Dendritic cell treated with granulocyte-macrophage colony-stimulating factor and Interleukin-4, amounts not matched to agents 40 ng/mL and 50 ng/mL, for 4 days (primary cell): ENCODE measurements at regions of chr19 and their contacts with region 1.

Region 1: DNA sequence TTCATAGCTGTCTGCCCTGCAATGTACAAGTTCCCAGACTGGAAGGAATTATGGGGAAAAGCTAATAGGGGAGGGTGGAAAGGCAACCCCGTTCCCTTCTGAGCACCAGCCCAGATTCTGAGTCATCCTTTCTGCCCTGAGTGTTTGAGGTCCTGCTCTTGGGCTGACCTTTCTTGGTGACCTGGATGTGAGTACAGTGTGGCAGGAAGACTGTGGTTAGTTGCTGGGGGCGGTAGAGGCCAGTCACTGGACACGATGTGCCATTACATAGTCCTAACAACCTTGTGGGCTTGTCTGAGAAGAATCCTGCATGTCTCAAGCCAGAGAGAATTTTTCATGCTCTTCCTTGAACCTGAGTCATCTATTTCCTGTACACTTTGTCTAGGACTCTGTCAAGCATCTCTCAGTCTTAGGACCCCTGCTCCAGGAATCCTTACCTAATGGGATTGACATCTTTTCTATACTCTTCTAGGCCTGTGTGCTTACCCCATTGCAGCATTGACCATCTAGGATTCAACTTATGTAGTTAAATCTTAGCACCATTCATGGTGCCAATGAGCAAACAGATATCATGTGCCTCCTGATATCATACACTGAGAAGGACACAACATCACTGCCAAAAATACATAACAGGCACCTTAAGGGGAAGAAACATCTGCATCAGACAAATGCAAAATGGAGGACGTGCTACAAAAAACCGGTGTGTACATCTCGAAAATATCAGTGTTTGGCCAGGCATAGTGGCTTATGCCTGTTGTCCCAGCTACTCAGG is 8.1 kb upstream of the ANGPTL4 start:
- H3K4me3 Mint-ChIP-seq: no peak overlapping the region
- H3K27ac Mint-ChIP-seq: peak overlapping the region; percentile 41
- H3K4me1 Mint-ChIP-seq: peaks cover 37% of the 10 kb centered on the region
- H3K27me3 Mint-ChIP-seq: peaks cover 43% of the 10 kb centered on the region

Region 2: GRCh38 chr19:8208922-8209461 is 146.8 kb before region 1 on chr19 and contains the start of gene CERS4:
- intact Hi-C with region 1: no loop called
- H3K4me3 Mint-ChIP-seq: peak within 1 kb of the TSS; percentile 61
- H3K27ac Mint-ChIP-seq: no peak within 1 kb of the TSS
- H3K4me1 Mint-ChIP-seq: peaks cover 13% of the 10 kb centered on the region
- H3K27me3 Mint-ChIP-seq: peaks cover 72% of the 10 kb centered on the region

Region 3: DNA sequence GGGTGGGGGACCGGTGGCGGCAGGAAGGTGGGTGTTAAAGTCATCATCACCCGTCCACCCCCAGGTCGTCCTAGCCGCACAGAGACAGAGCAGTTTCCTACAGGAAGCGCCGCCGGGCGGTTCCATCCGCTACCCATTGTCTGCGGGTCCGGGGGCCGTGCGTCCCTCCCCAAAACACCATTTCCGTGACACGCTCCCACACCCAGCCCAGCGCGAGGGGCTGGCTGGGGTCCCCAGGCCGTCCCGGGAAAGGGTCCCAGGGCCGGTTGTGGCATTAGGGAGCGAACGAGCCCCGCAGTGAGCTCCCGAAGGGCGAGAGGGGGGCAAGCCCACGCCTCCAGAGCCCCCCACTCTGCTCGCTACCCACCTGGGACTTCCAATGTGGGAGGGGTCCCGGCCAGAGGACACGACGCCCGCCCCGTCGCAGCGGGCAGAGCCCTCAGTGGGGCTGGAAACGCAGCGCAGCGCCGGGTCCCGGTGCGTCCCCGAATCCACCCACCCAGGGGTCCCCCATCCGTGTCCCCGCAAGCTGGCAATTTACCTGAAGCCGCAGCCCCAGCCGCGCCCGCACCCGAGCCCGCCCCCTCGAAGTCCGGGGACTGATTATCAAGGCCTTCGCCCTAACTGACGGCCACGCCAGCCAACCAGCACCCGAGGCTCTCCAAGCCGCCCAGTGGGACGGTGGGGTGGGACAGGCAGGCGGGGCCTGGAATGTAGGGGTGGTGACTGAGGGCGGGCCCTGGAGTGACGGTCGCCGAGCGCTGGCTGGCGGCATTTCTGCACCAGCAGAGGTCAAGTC is 12.9 kb before region 1 on chr19 and contains the start of gene KANK3:
- intact Hi-C with region 1: no loop called
- H3K4me3 Mint-ChIP-seq: peak within 1 kb of the TSS; percentile 60
- H3K27ac Mint-ChIP-seq: no peak within 1 kb of the TSS
- H3K4me1 Mint-ChIP-seq: peaks cover 16% of the 10 kb centered on the region
- H3K27me3 Mint-ChIP-seq: peaks cover 83% of the 10 kb centered on the region

Region 4: DNA sequence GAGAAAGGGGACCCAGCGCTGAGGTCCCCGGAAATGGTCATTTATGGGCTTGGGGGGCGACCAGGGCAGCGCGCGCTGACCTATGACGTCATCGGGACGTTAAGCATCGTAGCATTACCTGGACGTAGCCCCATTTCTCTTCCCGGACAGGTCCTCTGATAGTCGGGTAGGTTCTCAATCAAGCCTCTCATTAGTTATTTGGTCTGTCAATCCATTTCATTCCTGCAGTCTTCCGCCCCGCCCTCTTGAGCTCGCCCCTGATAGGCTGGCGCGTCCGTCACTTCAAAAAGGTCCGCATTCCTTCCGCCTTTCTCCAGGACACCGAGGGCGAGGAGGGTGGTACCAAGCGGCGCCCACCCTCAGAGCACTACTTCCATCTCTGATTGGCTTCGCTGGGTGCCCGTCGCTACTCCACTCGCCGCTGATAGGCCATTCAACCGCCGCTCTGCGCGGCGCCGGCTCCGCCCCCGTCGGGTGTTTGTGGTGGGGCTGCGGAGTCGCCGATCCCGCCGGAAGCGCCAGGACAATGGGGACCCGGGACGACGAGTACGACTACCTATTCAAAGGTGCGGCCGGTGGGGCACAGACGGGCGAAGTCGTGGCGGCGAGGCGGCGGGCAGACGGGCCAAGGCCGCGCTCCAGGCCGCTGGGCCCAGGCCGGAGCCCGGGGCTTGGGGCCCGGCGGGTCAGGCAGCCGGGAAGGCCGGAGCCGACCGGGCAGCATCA is 34.2 kb after region 1 on chr19 and contains the start of gene RAB11B:
- intact Hi-C with region 1: loop called (anchors 2 kb)
- H3K4me3 Mint-ChIP-seq: peak within 1 kb of the TSS; percentile 90
- H3K27ac Mint-ChIP-seq: peak within 1 kb of the TSS; percentile 91
- H3K4me1 Mint-ChIP-seq: peaks cover 34% of the 10 kb centered on the region
- H3K27me3 Mint-ChIP-seq: no peaks in the 10 kb centered on the region

Region 5: GRCh38 chr19:8396563-8397203 is 40.9 kb after region 1 on chr19:
- intact Hi-C with region 1: loop called (anchors 1 kb)
- H3K4me3 Mint-ChIP-seq: no peak overlapping the region
- H3K27ac Mint-ChIP-seq: peak overlapping the region; percentile 52
- H3K4me1 Mint-ChIP-seq: peaks cover 49% of the 10 kb centered on the region
- H3K27me3 Mint-ChIP-seq: no peaks in the 10 kb centered on the region

Region 6: DNA sequence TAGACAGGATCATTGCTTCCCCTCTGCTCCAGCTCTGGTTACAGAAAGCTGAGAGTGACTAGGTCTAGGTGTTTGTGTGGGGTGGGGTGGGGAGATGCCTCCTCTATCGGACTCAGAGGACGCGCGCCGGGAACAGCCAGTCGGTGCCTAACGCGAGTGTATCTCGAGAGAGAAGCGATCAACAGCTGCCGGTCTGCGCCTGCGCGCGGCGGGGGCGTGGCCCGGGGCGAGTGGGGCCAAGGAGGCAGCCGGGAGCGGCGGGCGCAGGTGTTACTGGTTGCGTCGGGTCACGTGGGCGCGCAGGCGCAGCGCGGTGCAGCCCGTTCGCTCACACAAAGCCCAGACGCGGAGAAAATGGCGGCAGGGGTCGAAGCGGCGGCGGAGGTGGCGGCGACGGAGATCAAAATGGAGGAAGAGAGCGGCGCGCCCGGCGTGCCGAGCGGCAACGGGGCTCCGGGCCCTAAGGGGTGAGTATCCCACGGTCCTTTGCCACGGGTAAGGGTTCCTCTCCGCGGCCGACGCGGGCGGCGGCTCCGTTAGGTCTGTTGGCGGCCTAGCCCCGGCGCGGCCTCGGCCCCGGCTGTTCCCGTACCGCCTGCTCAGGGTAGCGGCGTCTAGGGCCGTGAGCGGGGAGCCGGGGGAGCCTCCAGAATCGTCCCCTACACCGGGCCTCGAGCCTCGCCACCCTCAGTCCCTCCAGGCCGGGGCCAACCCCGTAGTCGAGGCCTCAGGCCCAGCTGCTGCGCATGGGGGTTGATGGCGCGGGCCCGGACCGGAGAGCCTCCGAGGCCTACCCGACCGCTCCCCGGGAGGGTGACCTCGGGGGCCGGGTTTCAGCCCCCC is 89.0 kb after region 1 on chr19 and contains the start of gene HNRNPM:
- intact Hi-C with region 1: loop called (anchors 1 kb)
- H3K4me3 Mint-ChIP-seq: peak within 1 kb of the TSS; percentile 94
- H3K27ac Mint-ChIP-seq: peak within 1 kb of the TSS; percentile 94
- H3K4me1 Mint-ChIP-seq: peaks cover 46% of the 10 kb centered on the region
- H3K27me3 Mint-ChIP-seq: no peaks in the 10 kb centered on the region

Region 7: DNA sequence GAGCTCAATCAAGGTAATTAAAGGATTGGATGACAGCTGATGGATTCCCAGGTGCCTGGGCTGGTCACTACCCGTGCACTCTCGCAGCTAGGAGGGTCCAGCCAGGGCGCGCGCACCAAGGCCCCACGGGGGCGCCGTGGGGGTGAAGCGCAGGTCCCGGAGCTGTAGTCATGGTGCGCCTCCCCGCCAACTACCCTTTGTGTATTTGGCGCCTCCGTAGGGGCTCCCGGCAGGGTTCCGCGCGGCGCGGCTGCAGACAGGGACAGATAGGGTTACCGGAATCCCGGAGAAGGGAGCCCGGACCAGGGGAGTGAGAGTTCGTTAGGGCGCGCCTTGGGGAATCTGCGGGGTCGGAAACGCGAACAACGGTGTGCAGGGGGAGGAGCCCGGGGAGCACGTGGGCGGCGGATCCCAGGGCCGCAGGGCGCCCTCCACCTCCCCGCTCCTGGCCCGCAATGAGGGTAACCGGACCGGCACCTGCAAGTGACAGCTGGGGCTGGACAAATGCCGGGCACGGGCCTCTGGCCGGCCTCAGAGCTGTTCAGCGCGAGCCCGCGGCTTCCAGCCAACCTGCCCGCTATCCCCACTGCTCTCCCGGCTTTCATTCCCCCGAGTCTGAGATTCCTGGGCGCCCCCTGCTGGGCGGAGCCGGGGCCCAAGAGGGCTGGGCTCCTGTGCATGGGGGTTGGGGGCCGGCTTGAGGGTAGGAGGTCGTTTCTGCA is 150.0 kb after region 1 on chr19:
- intact Hi-C with region 1: loop called (anchors 10 kb)
- H3K4me3 Mint-ChIP-seq: peak overlapping the region; percentile 90
- H3K27ac Mint-ChIP-seq: peak overlapping the region; percentile 90
- H3K4me1 Mint-ChIP-seq: peaks cover 68% of the 10 kb centered on the region
- H3K27me3 Mint-ChIP-seq: no peaks in the 10 kb centered on the region